MCF 10A (cell line): ENCODE measurements at regions of chrX and their contacts with region 1.

Region 1: DNA sequence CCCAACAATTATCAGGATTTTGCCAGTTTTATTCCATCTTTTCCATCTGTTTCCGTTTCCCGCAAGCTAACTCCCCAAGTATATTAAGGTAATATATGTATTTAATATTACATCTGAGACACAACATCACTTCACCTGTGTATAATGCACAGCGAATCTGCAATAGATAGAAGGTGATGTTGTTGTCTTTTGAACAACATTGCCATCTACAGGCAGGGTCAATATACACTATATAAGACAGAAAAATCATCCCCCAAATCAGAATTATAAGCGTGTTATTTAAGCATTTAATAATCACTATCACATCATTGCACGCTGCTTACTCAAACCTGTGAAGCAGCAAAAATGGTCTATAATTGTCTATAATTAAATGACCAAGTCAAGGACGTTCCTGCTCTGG is 1115.5 kb downstream of the NLGN4X start:
- DNase-seq: peak; percentile 14
- H3K4me3 Mint-ChIP-seq: no peak overlapping the region
- H3K27ac Mint-ChIP-seq: no peak overlapping the region
- H3K4me1 Mint-ChIP-seq: no peaks in the 10 kb centered on the region
- H3K27me3 Mint-ChIP-seq: no peaks in the 10 kb centered on the region
- CTCF ChIP-seq: peak; percentile 37

Region 2: GRCh38 chrX:4547213-4547836 is 565.8 kb before region 1 on chrX:
- CTCF ChIA-PET with region 1: interaction called, 10 read pairs
- POLR2A ChIA-PET with region 1: no interaction called
- intact Hi-C with region 1: loop called (anchors 2 kb)
- DNase-seq: peak; percentile 48
- H3K4me3 Mint-ChIP-seq: no peak overlapping the region
- H3K27ac Mint-ChIP-seq: no peak overlapping the region
- H3K4me1 Mint-ChIP-seq: no peaks in the 10 kb centered on the region
- H3K27me3 Mint-ChIP-seq: no peaks in the 10 kb centered on the region
- CTCF ChIP-seq: peak; percentile 91

Region 3: GRCh38 chrX:4787987-4788386 is 325.1 kb before region 1 on chrX:
- CTCF ChIA-PET with region 1: no interaction called
- POLR2A ChIA-PET with region 1: no interaction called
- intact Hi-C with region 1: loop called (anchors 2 kb)
- DNase-seq: no peak
- H3K4me3 Mint-ChIP-seq: no peak overlapping the region
- H3K27ac Mint-ChIP-seq: no peak overlapping the region
- H3K4me1 Mint-ChIP-seq: no peaks in the 10 kb centered on the region
- H3K27me3 Mint-ChIP-seq: no peaks in the 10 kb centered on the region
- CTCF ChIP-seq: no peak

Region 4: GRCh38 chrX:4978613-4979012 is 134.5 kb before region 1 on chrX:
- CTCF ChIA-PET with region 1: no interaction called
- POLR2A ChIA-PET with region 1: no interaction called
- intact Hi-C with region 1: loop called (anchors 10 kb)
- DNase-seq: no peak
- H3K4me3 Mint-ChIP-seq: no peak overlapping the region
- H3K27ac Mint-ChIP-seq: no peak overlapping the region
- H3K4me1 Mint-ChIP-seq: no peaks in the 10 kb centered on the region
- H3K27me3 Mint-ChIP-seq: no peaks in the 10 kb centered on the region
- CTCF ChIP-seq: no peak

Region 5: DNA sequence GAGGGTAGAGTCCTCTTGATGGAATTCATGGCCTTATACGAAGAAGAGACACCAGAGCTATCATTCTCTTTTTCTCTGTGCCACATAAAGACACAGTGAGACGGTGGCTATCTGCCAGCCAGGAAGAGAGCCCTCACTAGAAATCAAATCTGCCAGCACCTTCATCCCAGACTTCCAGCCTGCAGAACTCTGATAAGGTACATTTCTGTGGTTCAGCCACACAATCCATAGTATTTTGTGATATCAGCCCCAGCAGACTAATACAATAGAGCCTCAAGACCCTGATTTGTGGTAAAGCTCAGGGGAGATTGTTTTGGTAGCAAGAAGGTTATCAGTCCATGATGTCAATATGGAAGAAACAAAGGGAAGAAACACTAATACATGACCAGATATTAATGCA is 97.7 kb before region 1 on chrX:
- CTCF ChIA-PET with region 1: no interaction called
- POLR2A ChIA-PET with region 1: no interaction called
- intact Hi-C with region 1: no loop called
- DNase-seq: no peak
- H3K4me3 Mint-ChIP-seq: no peak overlapping the region
- H3K27ac Mint-ChIP-seq: no peak overlapping the region
- H3K4me1 Mint-ChIP-seq: no peaks in the 10 kb centered on the region
- H3K27me3 Mint-ChIP-seq: no peaks in the 10 kb centered on the region
- CTCF ChIP-seq: no peak

Region 6: DNA sequence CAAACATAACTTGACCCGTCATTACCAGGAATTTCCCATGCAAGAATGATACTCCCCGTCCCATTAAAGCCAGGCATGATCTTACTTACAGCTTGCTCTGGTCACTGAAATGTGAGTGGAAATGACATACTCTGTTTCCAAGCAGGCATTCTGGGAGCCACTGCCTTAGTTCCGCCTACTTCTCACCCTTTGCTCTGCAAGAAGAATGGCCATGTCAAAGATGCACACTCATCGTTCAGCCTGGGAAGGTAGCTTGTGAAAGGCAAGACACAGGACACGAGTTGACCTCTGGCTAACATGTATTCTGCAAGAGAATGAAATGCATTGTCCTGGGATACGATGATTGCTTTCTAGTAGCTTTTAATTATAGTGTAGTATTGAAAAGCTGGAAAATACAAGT is 28.8 kb before region 1 on chrX:
- CTCF ChIA-PET with region 1: no interaction called
- POLR2A ChIA-PET with region 1: no interaction called
- intact Hi-C with region 1: no loop called
- DNase-seq: no peak
- H3K4me3 Mint-ChIP-seq: no peak overlapping the region
- H3K27ac Mint-ChIP-seq: no peak overlapping the region
- H3K4me1 Mint-ChIP-seq: no peaks in the 10 kb centered on the region
- H3K27me3 Mint-ChIP-seq: no peaks in the 10 kb centered on the region
- CTCF ChIP-seq: no peak